Breast epithelium (tissue), 4 donors: ENCODE measurements at regions of chr11 and their contacts with region 1.

Region 1: DNA sequence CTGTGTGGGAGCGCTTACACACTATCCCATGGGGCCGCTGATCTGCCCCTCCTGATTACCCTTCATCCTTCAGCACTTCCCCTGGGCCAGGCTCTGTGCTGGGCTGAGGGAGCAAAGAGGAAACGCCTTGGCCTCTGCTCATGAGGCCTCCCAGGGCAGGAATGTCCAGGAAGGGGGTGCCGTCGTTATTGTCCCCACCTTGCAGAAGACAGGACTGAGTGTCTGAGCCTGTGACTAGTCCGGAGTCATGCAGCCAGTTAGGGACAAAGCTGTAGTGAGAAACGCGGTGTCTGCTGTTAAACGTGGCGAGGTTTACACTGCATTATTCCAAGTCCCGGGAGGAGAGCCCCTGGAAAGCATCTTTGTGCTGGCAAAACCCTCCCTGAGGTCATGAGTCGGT is 160.0 kb downstream of the TRIM29 start:
- DNase-seq: no peak
- H3K4me3 ChIP-seq: no peak overlapping the region
- H3K27ac ChIP-seq: no peak overlapping the region
- H3K4me1 ChIP-seq: no peaks in the 10 kb centered on the region
- H3K27me3 ChIP-seq: peaks cover 0 to 7% of the 10 kb centered on the region in 2 donors
- CTCF ChIP-seq: no peak
- POLR2A ChIP-seq: no peak

Region 2: GRCh38 chr11:118791111-118791965 is 1186.5 kb before region 1 on chr11 and contains the start of gene DDX6:
- intact Hi-C with region 1: no loop called
- DNase-seq: peak; percentile 91 to 96
- H3K4me3 ChIP-seq: peak within 1 kb of the TSS; percentile 86 to 97 (median 87)
- H3K27ac ChIP-seq: peak within 1 kb of the TSS; percentile 100
- H3K4me1 ChIP-seq: peaks cover 2 to 5% of the 10 kb centered on the region in 2 donors
- H3K27me3 ChIP-seq: no peaks in the 10 kb centered on the region
- CTCF ChIP-seq: peak; percentile 28 to 46 (median 31)
- POLR2A ChIP-seq: peak; percentile 97
- total RNA-seq, gene DDX6: 82.6 to 136 (median 125) TPM

Region 3: DNA sequence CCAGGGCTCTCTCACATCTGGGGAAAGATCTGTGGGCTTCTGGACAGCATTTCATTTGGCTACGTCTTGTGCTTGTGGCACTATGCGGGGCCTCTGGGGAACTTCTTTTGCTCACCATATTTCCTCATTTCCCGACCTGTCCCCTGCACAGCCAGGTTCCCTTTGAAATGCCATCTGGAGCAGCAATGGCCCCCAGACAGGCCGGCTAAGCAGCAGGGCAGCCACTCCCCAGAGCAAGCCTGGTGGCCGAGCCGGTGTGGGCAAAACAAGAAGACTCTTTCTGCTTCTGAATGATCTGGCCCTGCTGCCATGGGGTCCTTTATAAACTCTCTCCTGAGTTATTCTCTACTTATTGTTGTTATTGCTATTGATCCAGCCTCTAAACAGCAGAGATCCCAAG is 58.2 kb before region 1 on chr11:
- intact Hi-C with region 1: loop called (anchors 2 kb)
- DNase-seq: no peak
- H3K4me3 ChIP-seq: no peak overlapping the region
- H3K27ac ChIP-seq: no peak overlapping the region
- H3K4me1 ChIP-seq: no peaks in the 10 kb centered on the region
- H3K27me3 ChIP-seq: peaks cover 0 to 10% of the 10 kb centered on the region in 2 donors
- CTCF ChIP-seq: no peak
- POLR2A ChIP-seq: no peak